Naive thymus-derived CD8-positive, alpha-beta T cell (primary cell): ENCODE measurements at regions of chr2 and their contacts with region 1.

Region 1: DNA sequence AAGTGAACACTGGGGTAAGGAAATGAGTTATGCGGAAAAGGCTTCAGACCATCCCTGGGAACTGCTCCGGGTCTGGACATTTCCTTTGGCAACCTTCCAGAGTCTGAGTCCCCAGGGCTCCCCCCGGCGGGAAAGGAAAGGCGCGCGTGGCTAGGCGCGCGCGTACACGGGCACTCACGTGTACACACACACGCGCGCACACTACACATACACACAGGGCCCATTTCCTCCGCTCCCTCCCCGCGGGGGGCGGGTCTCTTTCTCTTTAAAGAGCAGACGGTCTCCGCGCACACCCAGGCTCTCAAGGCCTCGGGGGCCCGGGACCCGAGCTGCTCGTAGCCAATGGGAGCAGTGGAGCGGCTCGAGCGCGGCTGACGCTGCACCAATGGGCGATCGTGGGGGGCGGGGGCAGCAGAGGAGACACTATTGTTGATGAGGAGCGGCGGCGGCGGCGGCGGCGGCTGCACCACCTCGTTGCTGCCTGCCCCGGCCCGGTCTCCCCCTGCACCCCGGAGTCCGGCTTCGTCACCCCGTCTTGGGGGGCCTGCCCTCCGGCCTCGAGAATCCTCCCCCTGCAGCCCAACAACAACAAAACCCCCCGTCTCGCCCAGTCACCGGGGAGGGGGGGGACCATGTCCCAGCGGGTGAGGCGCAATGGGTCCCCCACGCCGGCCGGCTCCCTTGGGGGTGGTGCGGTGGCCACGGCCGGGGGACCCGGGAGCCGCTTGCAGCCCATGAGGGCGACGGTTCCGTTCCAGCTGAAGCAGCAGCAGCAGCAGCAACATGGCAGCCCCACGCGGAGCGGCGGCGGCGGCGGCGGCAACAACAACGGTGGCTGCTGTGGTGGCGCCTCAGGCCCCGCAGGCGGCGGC is at the start of gene FAM117B:
- DNase-seq: peak; percentile 91 to 100 (median 98)
- ATAC-seq: peak; percentile 85 to 87
- H3K4me3 Mint-ChIP-seq: peak within 1 kb of the TSS; percentile 95 to 99 (median 97)
- H3K27ac Mint-ChIP-seq: peak within 1 kb of the TSS; percentile 96 to 100 (median 99)
- H3K4me1 Mint-ChIP-seq: peaks cover 28 to 62% (median 55%) of the 10 kb centered on the region in 4 donors
- H3K27me3 Mint-ChIP-seq: no peaks in the 10 kb centered on the region
- polyA plus RNA-seq, gene FAM117B: 11.0 to 24.4 (median 16.0) TPM

Region 2: GRCh38 chr2:201807452-201807999 is 827.3 kb before region 1 on chr2:
- POLR2A ChIA-PET with region 1: no interaction called
- DNase-seq: no peak
- ATAC-seq: no peak
- H3K4me3 Mint-ChIP-seq: no peak overlapping the region
- H3K27ac Mint-ChIP-seq: no peak overlapping the region
- H3K4me1 Mint-ChIP-seq: no peaks in the 10 kb centered on the region
- H3K27me3 Mint-ChIP-seq: peaks cover 2 to 42% (median 8%) of the 10 kb centered on the region in 5 donors

Region 3: GRCh38 chr2:202514732-202515131 is 120.1 kb before region 1 on chr2:
- POLR2A ChIA-PET with region 1: no interaction called
- DNase-seq: no peak
- ATAC-seq: no peak
- H3K4me3 Mint-ChIP-seq: no peak overlapping the region
- H3K27ac Mint-ChIP-seq: no peak overlapping the region
- H3K4me1 Mint-ChIP-seq: no peaks in the 10 kb centered on the region
- H3K27me3 Mint-ChIP-seq: no peaks in the 10 kb centered on the region

Region 4: DNA sequence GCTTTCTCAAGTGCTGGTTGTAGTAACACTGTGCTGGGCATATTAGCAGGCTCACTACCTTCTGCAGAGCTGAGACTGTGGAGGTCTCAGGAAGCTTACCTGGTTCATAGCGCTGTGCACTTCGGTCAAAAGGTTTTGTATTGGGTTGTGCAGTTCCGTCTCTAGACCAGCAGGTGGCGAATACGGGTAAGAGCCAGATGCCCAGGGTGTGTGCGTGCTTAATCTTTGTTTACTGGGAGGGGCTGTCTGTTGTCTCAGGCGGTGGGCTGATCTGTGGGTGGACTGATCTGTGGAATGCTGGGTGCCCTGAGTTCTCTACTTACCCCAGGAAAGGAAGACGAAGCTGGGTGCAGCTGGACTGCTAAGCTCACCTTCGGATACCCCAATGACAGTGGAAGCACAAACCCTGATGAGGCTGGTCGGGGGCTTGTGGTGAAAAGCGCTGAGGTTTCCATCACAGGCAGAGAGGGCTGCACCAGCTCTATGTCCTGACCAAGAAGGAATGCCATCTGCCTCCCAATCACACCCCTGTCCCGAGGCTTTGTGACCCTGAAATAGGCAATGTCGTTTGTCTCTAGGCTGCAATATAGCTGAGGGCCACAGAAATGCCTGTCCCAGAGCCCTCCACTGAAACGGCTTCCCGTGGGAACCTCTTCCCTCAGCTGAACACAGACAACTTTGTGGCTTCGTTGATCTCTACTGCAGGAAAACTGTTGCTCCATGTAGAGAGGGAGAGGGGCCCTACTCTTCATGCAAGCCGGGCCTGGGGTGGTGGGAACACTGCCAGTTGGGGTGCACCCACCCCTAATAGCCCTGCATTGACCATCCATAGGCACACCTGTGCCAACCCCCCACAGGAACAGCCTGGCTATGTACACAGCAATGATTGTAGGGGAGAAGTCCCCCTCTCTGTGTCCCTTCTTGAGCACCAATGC is 45.9 kb before region 1 on chr2:
- POLR2A ChIA-PET with region 1: interaction called, 52 read pairs
- DNase-seq: peak; percentile 38 to 89 (median 72)
- ATAC-seq: peak; percentile 97 to 99
- H3K4me3 Mint-ChIP-seq: peak overlapping the region in 8 of 10 donors; percentile 2 to 56 (median 34)
- H3K27ac Mint-ChIP-seq: peak overlapping the region in 5 of 10 donors; percentile 35 to 88 (median 84)
- H3K4me1 Mint-ChIP-seq: peaks cover 7 to 15% (median 10%) of the 10 kb centered on the region in 4 donors
- H3K27me3 Mint-ChIP-seq: no peaks in the 10 kb centered on the region

Region 5: DNA sequence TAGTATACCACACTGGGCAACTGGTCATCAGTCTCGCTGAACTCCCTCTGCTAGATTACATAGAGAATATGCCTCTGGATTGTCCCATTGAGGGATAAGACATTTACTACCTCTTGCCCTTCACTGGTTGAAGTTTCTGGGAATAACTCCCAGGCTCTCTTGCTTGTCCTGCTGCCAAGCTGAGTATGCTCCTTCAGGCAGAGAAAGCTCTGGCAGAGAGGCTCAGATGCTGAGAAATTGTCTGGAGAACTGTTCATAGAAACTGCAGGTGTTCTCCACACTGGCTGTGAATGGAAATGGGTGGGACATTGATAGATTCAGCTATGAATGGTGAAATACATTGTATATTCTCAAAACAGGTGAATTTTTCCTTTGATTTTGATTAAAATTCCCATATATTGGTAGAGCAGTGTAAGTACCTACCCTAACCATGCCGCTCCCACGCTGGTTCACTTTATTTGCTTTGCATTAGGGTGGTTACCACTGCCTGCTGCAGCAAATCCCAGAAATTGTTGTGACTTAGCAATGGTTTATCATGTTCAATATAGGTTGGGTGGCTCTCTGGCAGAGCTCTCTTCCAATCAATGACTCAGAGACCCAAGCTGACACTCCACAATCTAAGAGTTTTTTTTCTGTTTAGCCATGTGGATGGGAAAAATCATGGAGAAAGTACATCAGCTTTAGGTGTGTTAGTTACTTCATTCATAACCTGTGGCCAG is 36.7 kb after region 1 on chr2:
- POLR2A ChIA-PET with region 1: interaction called, 46 read pairs
- DNase-seq: no peak
- ATAC-seq: no peak
- H3K4me3 Mint-ChIP-seq: peak overlapping the region in 7 of 10 donors; percentile 8 to 78 (median 34)
- H3K27ac Mint-ChIP-seq: peak overlapping the region in 8 of 10 donors; percentile 46 to 96 (median 81)
- H3K4me1 Mint-ChIP-seq: peaks cover 32 to 86% (median 81%) of the 10 kb centered on the region in 4 donors
- H3K27me3 Mint-ChIP-seq: no peaks in the 10 kb centered on the region

Region 6: DNA sequence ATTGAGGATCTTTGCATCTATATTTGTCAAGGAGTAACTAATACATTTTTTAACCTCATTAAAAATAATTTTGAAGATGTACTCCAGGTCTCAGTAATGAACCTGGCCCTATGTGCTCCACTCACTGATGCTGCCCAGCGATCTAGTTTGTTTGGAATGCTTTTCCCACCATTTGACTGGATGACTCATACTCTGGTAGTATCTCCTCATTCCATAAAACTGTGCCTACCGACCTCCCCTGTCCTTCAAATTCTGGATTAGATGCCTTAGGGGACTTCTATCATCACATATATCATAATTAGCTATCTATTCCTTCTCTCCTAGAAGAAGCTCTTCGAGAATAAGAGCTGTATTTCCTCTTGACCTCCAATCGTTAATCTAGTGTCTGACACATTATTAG is 83.8 kb after region 1 on chr2:
- POLR2A ChIA-PET with region 1: interaction called, 25 read pairs
- DNase-seq: no peak
- ATAC-seq: no peak
- H3K4me3 Mint-ChIP-seq: peak overlapping the region in 7 of 10 donors; percentile 15 to 69 (median 29)
- H3K27ac Mint-ChIP-seq: peak overlapping the region in 9 of 10 donors; percentile 41 to 82 (median 73)
- H3K4me1 Mint-ChIP-seq: peaks cover 19 to 65% (median 54%) of the 10 kb centered on the region in 4 donors
- H3K27me3 Mint-ChIP-seq: no peaks in the 10 kb centered on the region

Region 7: GRCh38 chr2:202762556-202762955 is 127.8 kb after region 1 on chr2:
- POLR2A ChIA-PET with region 1: interaction called, 47 read pairs
- DNase-seq: peak in 6 of 10 donors; percentile 21 to 83 (median 58)
- ATAC-seq: peak; percentile 89 to 97
- H3K4me3 Mint-ChIP-seq: peak overlapping the region; percentile 51 to 86 (median 70)
- H3K27ac Mint-ChIP-seq: peak overlapping the region; percentile 54 to 96 (median 90)
- H3K4me1 Mint-ChIP-seq: peaks cover 20 to 77% (median 57%) of the 10 kb centered on the region in 4 donors
- H3K27me3 Mint-ChIP-seq: no peaks in the 10 kb centered on the region

Region 8: GRCh38 chr2:202870431-202871299 is 235.9 kb after region 1 on chr2:
- POLR2A ChIA-PET with region 1: interaction called, 32 read pairs
- DNase-seq: peak; percentile 30 to 81 (median 60)
- ATAC-seq: peak; percentile 83 to 86
- H3K4me3 Mint-ChIP-seq: peak overlapping the region; percentile 91 to 97 (median 94)
- H3K27ac Mint-ChIP-seq: peak overlapping the region; percentile 65 to 95 (median 86)
- H3K4me1 Mint-ChIP-seq: peaks cover 4 to 14% (median 8%) of the 10 kb centered on the region in 4 donors
- H3K27me3 Mint-ChIP-seq: no peaks in the 10 kb centered on the region

Region 9: DNA sequence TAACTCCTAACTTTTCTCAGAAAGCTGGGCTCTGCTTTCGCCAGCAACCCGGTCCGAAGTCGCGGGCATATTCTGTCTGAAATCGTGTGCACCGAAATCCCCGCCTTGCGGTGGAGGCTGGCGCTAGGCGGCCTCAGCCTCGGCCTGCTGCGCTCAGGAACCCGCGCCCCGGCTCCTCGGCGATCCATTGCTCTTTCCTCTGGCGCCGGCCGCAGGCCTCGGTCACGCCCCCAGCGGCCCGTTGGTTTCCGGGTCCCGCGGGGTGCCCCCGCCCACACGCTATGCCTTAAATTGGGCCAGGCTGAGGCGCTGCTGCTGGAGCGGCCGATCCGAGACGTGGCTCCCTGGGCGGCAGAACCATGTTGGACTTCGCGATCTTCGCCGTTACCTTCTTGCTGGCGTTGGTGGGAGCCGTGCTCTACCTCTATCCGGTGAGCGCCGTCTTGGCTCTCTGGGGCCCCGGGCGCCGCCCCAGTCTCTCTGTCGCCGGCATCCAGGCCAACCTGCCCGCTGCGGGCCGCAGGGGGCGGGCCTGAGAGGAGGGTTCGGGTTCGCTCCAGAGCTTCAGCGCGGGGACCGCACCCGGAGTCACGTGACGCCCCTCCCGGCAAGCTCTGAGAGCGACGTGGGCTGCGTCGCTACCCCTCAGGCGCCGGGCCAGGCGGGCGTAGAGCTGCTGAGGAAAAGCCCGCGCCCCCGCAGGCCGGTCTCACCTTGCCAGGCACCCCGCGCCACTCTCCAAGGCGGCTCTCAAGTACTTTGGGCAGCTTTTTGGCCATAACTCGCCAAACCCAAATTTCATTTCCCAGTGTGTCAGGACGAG is 604.1 kb after region 1 on chr2 and contains the start of gene CYP20A1:
- POLR2A ChIA-PET with region 1: interaction called, 13 read pairs
- DNase-seq: peak; percentile 93 to 99 (median 97)
- ATAC-seq: peak; percentile 86
- H3K4me3 Mint-ChIP-seq: peak within 1 kb of the TSS; percentile 94 to 100 (median 98)
- H3K27ac Mint-ChIP-seq: peak within 1 kb of the TSS; percentile 96 to 100 (median 99)
- H3K4me1 Mint-ChIP-seq: peaks cover 24 to 43% (median 39%) of the 10 kb centered on the region in 4 donors
- H3K27me3 Mint-ChIP-seq: no peaks in the 10 kb centered on the region
- polyA plus RNA-seq, gene CYP20A1: 19.3 to 36.2 (median 22.7) TPM